ENCODE measurements at regions of chr11 and their contacts with region 1.

Region 1: GRCh38 chr11:15074206-15075161 is 1.1 kb downstream of the CALCB start:
- DNase-seq: peak; percentile 96
- ATAC-seq: peak; percentile 92
- H3K4me3 Mint-ChIP-seq: peak overlapping the region; percentile 80
- H3K27ac Mint-ChIP-seq: peak overlapping the region; percentile 83
- H3K4me1 Mint-ChIP-seq: peaks cover 14% of the 10 kb centered on the region
- H3K27me3 Mint-ChIP-seq: peaks cover 14% of the 10 kb centered on the region
- CTCF ChIP-seq: peak; percentile 94

Region 2: DNA sequence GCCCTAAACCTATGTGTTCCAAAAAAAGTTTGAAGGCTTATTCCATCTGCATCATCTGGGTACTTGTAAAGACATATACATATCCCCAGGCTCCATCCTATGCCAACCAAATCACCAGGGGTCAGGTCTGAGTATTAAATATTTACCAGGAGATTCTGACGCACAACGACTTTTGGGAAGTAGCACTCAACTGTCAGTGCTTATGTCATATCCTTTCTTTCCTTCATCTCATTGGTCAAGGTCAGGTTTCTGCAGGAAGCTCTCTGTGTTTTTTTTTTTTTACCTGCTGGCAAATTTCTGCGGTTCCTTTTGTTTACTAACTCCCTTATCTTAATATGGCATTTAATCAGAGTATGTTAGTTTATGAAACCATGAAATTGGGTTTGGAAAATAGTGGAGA is 159.9 kb before region 1 on chr11:
- CTCF ChIA-PET with region 1: interaction called, 171 read pairs
- POLR2A ChIA-PET with region 1: no interaction called
- intact Hi-C with region 1: no loop called
- DNase-seq: no peak
- ATAC-seq: no peak
- H3K4me3 Mint-ChIP-seq: no peak overlapping the region
- H3K27ac Mint-ChIP-seq: no peak overlapping the region
- H3K4me1 Mint-ChIP-seq: no peaks in the 10 kb centered on the region
- H3K27me3 Mint-ChIP-seq: no peaks in the 10 kb centered on the region
- CTCF ChIP-seq: no peak

Region 3: DNA sequence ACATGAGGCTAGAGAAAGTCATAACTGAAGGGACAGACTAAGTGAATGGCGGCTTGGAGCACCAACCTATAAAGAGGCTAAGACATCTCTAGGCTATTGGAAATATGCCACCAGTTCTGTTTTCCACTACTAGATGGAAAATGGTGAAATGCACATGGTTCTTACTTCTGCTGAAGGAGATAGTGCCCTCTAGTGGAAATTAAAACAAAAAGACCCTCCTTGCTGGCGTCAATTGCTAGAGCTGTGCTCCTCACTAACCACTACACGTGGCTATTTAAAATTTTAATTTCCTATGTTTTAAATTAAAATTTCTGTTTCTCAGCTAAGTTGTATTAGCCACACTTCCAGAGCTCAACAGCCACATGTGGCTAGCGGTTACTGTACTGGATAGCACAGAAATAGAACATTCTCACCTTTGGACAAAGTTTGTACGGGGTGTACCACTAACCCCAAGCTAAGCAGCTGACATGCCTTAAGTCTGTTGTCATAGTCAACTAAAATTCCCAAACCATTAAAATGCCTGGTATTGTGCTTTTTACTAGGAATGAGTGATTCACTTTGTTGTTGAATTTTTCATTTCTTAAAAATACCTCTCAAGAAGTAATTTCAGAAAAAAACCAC is 68.2 kb before region 1 on chr11:
- CTCF ChIA-PET with region 1: interaction called, 44 read pairs
- POLR2A ChIA-PET with region 1: no interaction called
- intact Hi-C with region 1: loop called (anchors 10 kb)
- DNase-seq: peak; percentile 9
- ATAC-seq: peak; percentile 69
- H3K4me3 Mint-ChIP-seq: no peak overlapping the region
- H3K27ac Mint-ChIP-seq: no peak overlapping the region
- H3K4me1 Mint-ChIP-seq: no peaks in the 10 kb centered on the region
- H3K27me3 Mint-ChIP-seq: peaks cover 28% of the 10 kb centered on the region
- CTCF ChIP-seq: peak; percentile 89

Region 4: GRCh38 chr11:15053191-15053685 is 21.2 kb before region 1 on chr11:
- CTCF ChIA-PET with region 1: interaction called, 80 read pairs
- POLR2A ChIA-PET with region 1: interaction called, 3 read pairs
- intact Hi-C with region 1: no loop called
- DNase-seq: peak; percentile 51
- ATAC-seq: peak; percentile 89
- H3K4me3 Mint-ChIP-seq: peak overlapping the region; percentile 6
- H3K27ac Mint-ChIP-seq: peak overlapping the region; percentile 62
- H3K4me1 Mint-ChIP-seq: peaks cover 20% of the 10 kb centered on the region
- H3K27me3 Mint-ChIP-seq: peaks cover 5% of the 10 kb centered on the region
- CTCF ChIP-seq: no peak